ENCODE measurements at regions of chr1 and their contacts with region 1.

Region 1: DNA sequence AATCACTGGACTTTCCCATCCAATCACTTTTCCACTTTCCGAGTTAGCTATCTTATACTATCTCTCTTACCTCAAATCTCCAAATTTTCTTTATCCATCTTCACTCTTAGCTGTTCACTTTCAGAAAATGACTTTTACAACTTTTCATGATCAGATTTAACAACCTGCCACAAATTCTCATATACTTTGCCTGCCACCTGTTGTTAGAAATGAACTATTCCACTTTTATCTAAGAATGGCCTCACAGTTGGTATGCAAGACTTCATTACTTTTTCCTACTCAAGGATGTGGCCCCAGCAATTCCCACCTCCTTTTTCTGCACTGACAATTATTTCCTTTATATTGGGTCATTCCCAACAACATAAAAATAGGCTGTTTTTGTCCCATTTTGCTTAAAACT is 93.6 kb upstream of the DEPDC1 start:
- DNase-seq: no peak
- H3K4me3 Mint-ChIP-seq: no peak overlapping the region
- H3K27ac Mint-ChIP-seq: no peak overlapping the region
- H3K4me1 Mint-ChIP-seq: peaks cover 16% of the 10 kb centered on the region
- H3K27me3 Mint-ChIP-seq: no peaks in the 10 kb centered on the region
- CTCF ChIP-seq: no peak

Region 2: DNA sequence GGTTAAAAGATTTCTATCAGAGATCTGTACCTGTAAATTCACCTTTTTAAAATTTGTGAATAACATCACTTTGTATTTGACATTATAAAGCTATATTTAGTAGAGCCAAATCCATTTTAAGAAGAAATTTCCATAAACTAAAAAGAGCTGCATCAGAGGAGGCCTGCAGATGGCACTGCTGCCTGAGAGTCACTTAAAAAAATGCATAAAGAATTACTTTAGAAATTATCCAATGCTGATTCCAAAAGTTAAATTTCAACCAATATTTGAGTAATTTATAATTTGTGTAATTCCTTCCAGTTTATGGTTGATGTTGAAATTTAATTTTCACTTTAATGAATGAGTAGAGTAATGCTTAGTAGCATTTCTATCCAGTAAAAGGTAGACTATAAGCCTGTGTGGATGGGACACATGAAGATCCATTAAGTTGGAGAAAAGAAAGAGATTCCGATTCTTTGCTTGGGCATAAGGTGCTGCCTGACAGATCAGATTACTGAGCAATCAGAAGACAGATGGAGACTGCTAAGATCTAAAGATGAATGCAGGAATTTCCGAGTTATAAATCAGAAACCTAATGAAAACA is 120.0 kb before region 1 on chr1:
- CTCF ChIA-PET with region 1: interaction called, 3 read pairs
- intact Hi-C with region 1: loop called (anchors 1 kb)
- DNase-seq: peak; percentile 14
- H3K4me3 Mint-ChIP-seq: no peak overlapping the region
- H3K27ac Mint-ChIP-seq: no peak overlapping the region
- H3K4me1 Mint-ChIP-seq: no peaks in the 10 kb centered on the region
- H3K27me3 Mint-ChIP-seq: no peaks in the 10 kb centered on the region
- CTCF ChIP-seq: peak; percentile 34

Region 3: GRCh38 chr1:68481041-68481440 is 109.4 kb before region 1 on chr1:
- CTCF ChIA-PET with region 1: no interaction called
- intact Hi-C with region 1: no loop called
- DNase-seq: no peak
- H3K4me3 Mint-ChIP-seq: no peak overlapping the region
- H3K27ac Mint-ChIP-seq: no peak overlapping the region
- H3K4me1 Mint-ChIP-seq: peaks cover 7% of the 10 kb centered on the region
- H3K27me3 Mint-ChIP-seq: no peaks in the 10 kb centered on the region
- CTCF ChIP-seq: no peak

Region 4: DNA sequence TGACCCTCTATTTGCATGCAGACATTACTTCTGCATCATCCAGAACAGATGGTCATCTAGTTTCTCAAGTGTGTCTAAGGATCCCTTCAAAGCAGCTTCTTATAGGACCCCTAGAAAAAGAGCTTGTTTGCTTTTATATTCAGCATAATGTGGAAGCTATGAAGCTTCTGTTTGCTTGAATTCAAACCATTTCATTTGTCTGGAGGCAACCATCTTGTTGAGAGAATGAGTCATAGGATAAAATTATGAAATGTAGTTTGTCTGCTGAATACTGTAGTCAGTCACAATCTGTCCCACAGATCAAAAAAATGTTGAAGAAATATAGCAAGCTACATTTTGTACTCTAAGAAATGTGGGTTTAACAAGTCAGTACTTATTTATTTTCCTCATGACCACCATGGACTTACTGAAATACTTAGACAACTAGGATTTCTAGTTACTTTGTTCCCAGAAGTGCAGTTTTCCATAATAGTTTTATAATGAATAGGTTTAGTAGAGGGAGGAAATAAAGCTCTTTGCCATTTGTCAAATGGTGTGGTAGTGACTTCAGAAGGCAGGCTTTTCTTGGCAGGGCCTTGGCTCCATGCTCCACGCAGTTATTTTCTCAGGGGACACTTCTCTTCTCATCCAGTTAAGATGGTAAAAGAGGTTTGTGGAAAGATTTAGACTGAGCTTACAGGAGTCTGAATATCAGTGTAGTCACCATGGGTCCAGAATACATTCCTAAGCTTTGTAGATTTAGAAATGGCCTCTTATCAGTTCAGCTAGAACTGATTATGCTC is 18.8 kb before region 1 on chr1:
- CTCF ChIA-PET with region 1: no interaction called
- intact Hi-C with region 1: no loop called
- DNase-seq: no peak
- H3K4me3 Mint-ChIP-seq: no peak overlapping the region
- H3K27ac Mint-ChIP-seq: no peak overlapping the region
- H3K4me1 Mint-ChIP-seq: no peaks in the 10 kb centered on the region
- H3K27me3 Mint-ChIP-seq: no peaks in the 10 kb centered on the region
- CTCF ChIP-seq: no peak

Region 5: DNA sequence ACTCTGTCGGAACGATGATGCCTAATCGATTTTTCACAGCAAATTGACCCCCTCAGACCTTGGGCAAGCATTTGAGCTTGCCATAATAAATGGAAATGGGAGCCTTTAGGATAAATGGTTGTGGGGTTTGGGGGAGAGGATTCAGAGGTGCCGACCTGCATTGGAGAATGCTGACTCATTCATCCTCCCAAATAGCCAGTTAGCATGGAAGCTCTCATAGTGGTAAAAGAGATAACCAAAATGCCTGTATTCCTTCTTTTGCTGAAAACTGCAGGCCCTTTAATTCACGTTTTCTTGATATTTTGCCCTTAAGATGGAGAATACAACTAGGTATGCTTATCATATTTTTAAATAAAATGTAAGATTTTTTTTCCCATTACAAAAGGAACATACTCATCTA is 299.0 kb after region 1 on chr1:
- CTCF ChIA-PET with region 1: no interaction called
- intact Hi-C with region 1: no loop called
- DNase-seq: no peak
- H3K4me3 Mint-ChIP-seq: no peak overlapping the region
- H3K27ac Mint-ChIP-seq: no peak overlapping the region
- H3K4me1 Mint-ChIP-seq: no peaks in the 10 kb centered on the region
- H3K27me3 Mint-ChIP-seq: no peaks in the 10 kb centered on the region
- CTCF ChIP-seq: no peak

Region 6: DNA sequence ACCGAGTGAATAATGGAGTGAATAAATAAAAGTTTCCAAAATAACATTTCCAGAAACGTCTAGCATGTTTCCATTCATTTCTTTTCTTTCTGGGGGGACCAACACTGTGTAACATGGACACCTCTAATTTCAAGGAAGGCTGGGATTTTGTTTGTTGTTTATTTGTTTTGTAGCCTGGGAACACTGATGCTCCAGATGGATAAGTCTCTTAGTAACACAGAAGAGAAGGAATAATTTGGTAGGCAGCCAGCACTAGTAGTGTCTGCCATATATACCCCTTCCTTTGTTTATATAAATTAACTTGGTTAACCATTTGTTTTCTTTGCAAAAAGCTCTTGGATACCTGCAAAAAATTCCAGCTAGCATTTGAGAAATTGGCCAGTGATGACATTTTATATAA is 317.8 kb after region 1 on chr1:
- CTCF ChIA-PET with region 1: no interaction called
- intact Hi-C with region 1: no loop called
- DNase-seq: no peak
- H3K4me3 Mint-ChIP-seq: no peak overlapping the region
- H3K27ac Mint-ChIP-seq: no peak overlapping the region
- H3K4me1 Mint-ChIP-seq: no peaks in the 10 kb centered on the region
- H3K27me3 Mint-ChIP-seq: no peaks in the 10 kb centered on the region
- CTCF ChIP-seq: no peak